Endothelial cell of umbilical vein (primary cell): ENCODE measurements at regions of chr9 and their contacts with region 1.

Region 1: DNA sequence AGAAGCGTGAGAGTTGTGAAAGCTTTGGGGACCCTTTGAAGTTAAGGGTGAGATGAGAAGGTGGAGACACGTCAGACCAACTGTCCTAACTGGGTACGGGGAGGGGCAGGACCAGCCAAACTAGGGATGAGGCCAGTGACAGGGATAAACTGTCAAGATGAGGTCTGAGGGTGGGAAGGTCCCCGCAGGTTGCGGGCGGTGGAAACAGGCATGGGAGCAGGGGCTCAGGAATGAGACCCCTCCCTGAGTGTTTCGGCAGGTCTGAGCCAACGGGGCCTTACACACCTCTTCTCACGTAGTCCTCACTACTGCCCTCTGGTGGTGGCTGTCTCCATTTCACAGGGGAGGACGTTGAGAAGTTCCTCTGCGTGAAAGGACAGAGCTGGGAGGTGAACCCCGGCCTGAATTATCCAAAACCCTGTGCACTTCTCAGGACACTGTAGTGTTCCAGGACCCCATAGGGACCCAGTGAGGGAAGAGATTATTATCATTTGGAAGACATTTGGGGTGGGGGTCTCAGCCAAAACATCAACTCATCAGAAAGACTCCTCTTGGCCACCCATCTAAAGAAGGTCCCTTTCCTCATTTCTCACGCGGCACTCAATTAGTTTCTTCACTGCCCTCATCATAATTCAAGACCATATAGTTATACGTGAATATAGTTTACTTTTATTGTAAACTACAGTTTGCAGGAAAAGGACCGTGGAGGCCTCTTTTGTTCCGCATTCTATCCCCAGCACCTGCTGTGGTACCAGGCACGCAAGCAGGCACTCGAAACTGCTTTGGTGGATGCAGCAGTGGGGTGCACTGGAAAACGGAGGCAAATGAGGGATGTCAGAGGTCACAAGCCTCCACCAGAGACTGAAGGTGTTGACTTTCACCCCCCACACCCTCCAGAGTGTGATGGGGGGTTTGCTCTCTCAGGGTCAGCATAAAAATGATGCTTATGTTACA is 21.7 kb upstream of the NANS start:
- DNase-seq: peak; percentile 75
- H3K4me3 ChIP-seq: no peak overlapping the region
- H3K27ac ChIP-seq: peak overlapping the region; percentile 65
- H3K4me1 ChIP-seq: peaks cover 13% of the 10 kb centered on the region
- H3K27me3 ChIP-seq: no peaks in the 10 kb centered on the region
- CTCF ChIP-seq: peak; percentile 74 to 87
- POLR2A ChIP-seq: no peak

Region 2: DNA sequence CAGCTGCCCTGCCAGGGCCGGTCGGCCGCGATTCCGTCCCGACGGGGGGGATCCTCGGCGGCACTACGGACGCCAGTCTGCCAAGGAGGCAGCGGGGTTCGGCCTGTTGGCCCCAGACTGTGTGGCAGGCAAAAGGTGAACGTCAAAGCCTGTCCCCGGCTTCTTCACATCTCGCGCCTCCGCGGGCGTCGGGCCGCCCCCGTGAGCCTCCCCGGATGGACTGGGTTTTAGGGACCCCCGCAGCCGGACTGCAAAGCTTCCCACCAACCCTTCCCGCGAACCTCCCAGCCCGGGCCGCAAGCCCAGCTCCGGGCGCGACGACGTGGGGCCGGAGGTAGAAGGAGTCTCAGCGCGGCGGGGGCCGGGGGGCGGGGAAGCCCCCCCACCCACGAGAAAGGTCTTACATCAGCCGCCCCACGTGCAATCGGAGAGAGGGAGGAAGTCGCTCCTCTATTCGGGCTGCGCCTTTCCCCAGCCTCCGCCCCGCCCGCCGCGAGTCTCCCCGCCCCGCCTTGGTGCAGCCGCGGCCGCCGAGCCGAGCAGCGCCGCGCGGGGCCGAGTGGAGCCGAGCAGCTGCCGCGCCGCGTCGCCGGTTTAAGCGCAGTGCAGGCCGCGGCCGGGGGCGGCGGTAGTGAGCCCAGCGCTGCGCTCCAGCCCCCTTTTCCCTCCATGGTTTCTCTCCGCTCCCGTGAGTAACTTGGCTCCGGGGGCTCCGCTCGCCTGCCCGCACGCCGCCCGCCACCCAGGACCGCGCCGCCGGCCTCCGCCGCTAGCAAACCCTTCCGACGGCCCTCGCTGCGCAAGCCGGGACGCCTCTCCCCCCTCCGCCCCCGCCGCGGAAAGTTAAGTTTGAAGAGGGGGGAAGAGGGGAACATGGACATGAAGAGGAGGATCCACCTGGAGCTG is 51.9 kb before region 1 on chr9 and contains the start of gene ANP32B:
- CTCF ChIA-PET with region 1: interaction called, 37 read pairs
- POLR2A ChIA-PET with region 1: interaction called, 3 read pairs
- dilution Hi-C with region 1: no loop called
- intact Hi-C with region 1: loop called (anchors 1 kb)
- DNase-seq: peak; percentile 92
- H3K4me3 ChIP-seq: peak within 1 kb of the TSS; percentile 64 to 90 (median 75)
- H3K27ac ChIP-seq: peak within 1 kb of the TSS; percentile 94
- H3K4me1 ChIP-seq: peaks cover 24% of the 10 kb centered on the region
- H3K27me3 ChIP-seq: no peaks in the 10 kb centered on the region
- CTCF ChIP-seq: peak; percentile 86 to 88
- POLR2A ChIP-seq: peak; percentile 53
- total RNA-seq, gene ANP32B: 152 and 173 TPM in 2 replicates

Region 3: DNA sequence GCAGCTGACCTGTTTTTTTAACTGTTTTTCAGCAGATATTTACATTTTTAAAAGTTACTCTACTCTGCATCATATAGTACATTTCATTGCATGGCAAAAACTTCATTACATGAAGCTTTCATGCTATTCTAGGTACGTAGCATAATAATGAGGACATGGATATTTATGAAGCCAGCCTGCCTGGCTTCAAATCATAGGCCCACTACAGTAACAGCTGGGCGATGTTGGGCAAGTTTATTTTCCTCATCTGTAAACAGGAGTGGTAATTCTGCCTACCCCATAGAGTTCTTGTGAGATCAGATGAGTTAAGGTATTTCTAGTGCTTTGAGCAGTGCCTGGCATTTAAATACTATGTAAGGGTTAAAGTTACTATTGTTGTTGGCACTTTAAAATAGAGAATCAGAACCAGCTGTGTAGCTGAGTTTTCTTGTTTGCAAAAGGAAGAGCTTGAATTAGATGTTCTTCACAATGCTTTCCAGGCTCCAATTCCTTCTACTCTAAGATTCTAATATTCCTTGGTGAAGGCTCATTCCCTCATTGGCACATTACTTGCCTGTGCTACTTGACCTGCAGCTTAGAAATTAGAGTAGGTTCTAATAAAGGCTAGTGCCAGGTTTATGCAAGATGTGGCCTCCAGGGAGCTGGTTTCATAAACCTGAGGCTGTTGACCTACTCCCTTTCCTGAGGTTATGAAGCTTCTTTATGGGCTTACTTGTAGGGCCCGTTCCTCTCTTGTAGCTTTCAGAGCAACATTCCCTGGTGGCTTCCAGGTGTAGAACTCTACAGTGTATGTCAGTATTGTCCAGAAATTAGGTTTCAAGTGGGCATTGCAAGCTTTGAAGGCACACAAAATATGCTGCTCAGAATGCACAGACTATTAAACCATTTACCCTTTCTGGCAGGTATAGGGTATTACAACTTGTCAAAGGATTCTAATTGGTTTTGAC is 37.3 kb before region 1 on chr9:
- CTCF ChIA-PET with region 1: interaction called, 30 read pairs
- POLR2A ChIA-PET with region 1: no interaction called
- dilution Hi-C with region 1: no loop called
- intact Hi-C with region 1: no loop called
- DNase-seq: peak; percentile 48
- H3K4me3 ChIP-seq: no peak overlapping the region
- H3K27ac ChIP-seq: no peak overlapping the region
- H3K4me1 ChIP-seq: no peaks in the 10 kb centered on the region
- H3K27me3 ChIP-seq: no peaks in the 10 kb centered on the region
- CTCF ChIP-seq: no peak
- POLR2A ChIP-seq: no peak

Region 4: DNA sequence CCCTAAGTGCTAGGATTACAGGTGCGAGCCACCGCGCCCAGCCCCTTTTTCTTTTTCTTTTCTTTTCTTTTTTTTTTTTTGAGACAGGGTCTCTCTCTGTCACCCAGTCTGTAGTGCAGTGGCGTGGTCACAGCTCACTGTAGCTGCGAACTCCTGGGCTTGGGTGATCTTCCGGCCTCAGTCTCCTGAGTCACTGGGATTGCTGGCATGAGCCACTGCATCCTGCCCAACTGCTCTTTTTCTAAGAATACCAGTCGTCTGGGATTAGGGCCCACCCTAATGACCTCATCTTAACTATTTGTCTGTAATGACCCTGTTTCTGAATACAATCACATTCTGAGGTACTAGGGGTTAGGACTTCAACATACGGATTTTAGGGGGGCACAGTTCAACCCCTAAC is 12.4 kb before region 1 on chr9:
- CTCF ChIA-PET with region 1: interaction called, 31 read pairs
- POLR2A ChIA-PET with region 1: interaction called, 3 read pairs
- dilution Hi-C with region 1: no loop called
- intact Hi-C with region 1: no loop called
- DNase-seq: peak; percentile 64
- H3K4me3 ChIP-seq: no peak overlapping the region
- H3K27ac ChIP-seq: peak overlapping the region; percentile 73
- H3K4me1 ChIP-seq: peaks cover 18% of the 10 kb centered on the region
- H3K27me3 ChIP-seq: no peaks in the 10 kb centered on the region
- CTCF ChIP-seq: no peak
- POLR2A ChIP-seq: no peak

Region 5: GRCh38 chr9:98056269-98057137 is 21.6 kb after region 1 on chr9 and contains the start of gene NANS:
- CTCF ChIA-PET with region 1: interaction called, 30 read pairs
- POLR2A ChIA-PET with region 1: interaction called, 4 read pairs
- dilution Hi-C with region 1: no loop called
- intact Hi-C with region 1: no loop called
- DNase-seq: peak; percentile 99
- H3K4me3 ChIP-seq: peak within 1 kb of the TSS; percentile 60 to 91 (median 69)
- H3K27ac ChIP-seq: peak within 1 kb of the TSS; percentile 80
- H3K4me1 ChIP-seq: peaks cover 15% of the 10 kb centered on the region
- H3K27me3 ChIP-seq: no peaks in the 10 kb centered on the region
- CTCF ChIP-seq: peak in 1 of 2 donors; percentile 8
- POLR2A ChIP-seq: peak; percentile 93
- total RNA-seq, gene NANS: 72.5 and 85.1 TPM in 2 replicates